ENCODE measurements at regions of chr18 and their contacts with region 1.

Region 1: GRCh38 chr18:80009661-80010550 is 21.5 kb upstream of the TXNL4A start:
- DNase-seq: peak; percentile 99
- H3K4me3 Mint-ChIP-seq: peak overlapping the region; percentile 53
- H3K27ac Mint-ChIP-seq: peak overlapping the region; percentile 72
- H3K4me1 Mint-ChIP-seq: peaks cover 19% of the 10 kb centered on the region
- H3K27me3 Mint-ChIP-seq: no peaks in the 10 kb centered on the region
- CTCF ChIP-seq: no peak

Region 2: DNA sequence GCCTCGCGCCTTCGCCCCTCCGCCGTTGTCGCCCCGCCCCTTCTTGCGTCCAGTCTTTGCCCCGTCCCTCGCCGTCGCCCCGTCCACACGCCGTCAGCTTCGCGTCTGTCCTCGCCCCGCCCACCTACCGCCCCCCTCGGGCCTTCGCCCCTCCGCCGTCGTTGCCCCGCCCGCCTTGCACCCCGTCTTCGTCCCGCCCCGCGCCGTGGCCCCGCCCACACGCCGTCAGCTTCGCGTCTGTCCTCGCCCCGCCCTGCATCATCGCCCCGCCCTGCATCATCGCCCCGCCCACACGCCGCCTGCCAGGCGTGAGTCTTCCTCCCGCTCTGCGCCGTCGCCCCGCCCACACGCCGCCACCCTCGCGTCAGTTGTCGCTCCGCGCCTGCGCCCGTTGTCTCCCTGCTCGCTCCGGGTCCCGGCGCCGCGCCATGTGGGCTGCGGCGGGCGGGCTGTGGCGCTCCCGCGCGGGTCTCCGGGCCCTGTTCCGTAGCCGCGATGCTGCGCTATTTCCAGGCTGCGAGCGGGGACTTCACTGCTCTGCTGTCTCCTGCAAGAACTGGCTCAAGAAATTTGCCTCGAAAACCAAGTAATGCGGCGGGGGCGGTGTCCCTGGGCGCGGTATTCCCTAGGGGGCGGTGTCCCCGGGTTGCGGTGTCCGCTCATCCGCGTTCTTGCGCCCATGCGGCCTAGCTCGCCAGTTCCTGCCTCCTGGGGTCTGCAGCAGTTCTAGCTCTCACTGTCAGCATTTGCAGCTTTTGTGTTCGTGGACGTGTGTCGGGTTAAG is 24.4 kb after region 1 on chr18 and contains the start of gene RBFA:
- CTCF ChIA-PET with region 1: interaction called, 9 read pairs
- POLR2A ChIA-PET with region 1: interaction called, 41 read pairs
- intact Hi-C with region 1: loop called (anchors 2 kb)
- DNase-seq: peak; percentile 96
- H3K4me3 Mint-ChIP-seq: peak within 1 kb of the TSS; percentile 92
- H3K27ac Mint-ChIP-seq: peak within 1 kb of the TSS; percentile 100
- H3K4me1 Mint-ChIP-seq: peaks cover 23% of the 10 kb centered on the region
- H3K27me3 Mint-ChIP-seq: no peaks in the 10 kb centered on the region
- CTCF ChIP-seq: peak; percentile 49
- total RNA-seq, gene RBFA: 38.2 and 47.4 TPM in 2 replicates

Measured in MCF 10A (cell line).